HEK293 (cell line): ENCODE measurements at regions of chr14 and their contacts with region 1.

Region 1: GRCh38 chr14:23120541-23121251 is 1.6 kb upstream of the CEBPE start:
- H3K4me3 ChIP-seq: no peak overlapping the region
- H3K27ac ChIP-seq: no peak overlapping the region
- H3K4me1 ChIP-seq: no peaks in the 10 kb centered on the region
- CTCF ChIP-seq: peak; percentile 99

Region 2: GRCh38 chr14:23068476-23069412 is 52.0 kb before region 1 on chr14:
- CTCF ChIA-PET with region 1: interaction called, 12 read pairs
- POLR2A ChIA-PET with region 1: no interaction called
- H3K4me3 ChIP-seq: 0 out of 2 replicates have a peak overlapping the region, but pooled peaks have one; percentile 5
- H3K27ac ChIP-seq: peak overlapping the region; percentile 66
- H3K4me1 ChIP-seq: peaks cover 16% of the 10 kb centered on the region
- CTCF ChIP-seq: peak; percentile 95

Region 3: GRCh38 chr14:23136566-23137133 is 16.0 kb after region 1 on chr14:
- CTCF ChIA-PET with region 1: interaction called, 19 read pairs
- POLR2A ChIA-PET with region 1: no interaction called
- H3K4me3 ChIP-seq: no peak overlapping the region
- H3K27ac ChIP-seq: no peak overlapping the region
- H3K4me1 ChIP-seq: no peaks in the 10 kb centered on the region
- CTCF ChIP-seq: no peak

Region 4: GRCh38 chr14:23167116-23167847 is 46.6 kb after region 1 on chr14:
- CTCF ChIA-PET with region 1: interaction called, 68 read pairs
- POLR2A ChIA-PET with region 1: no interaction called
- H3K4me3 ChIP-seq: no peak overlapping the region
- H3K27ac ChIP-seq: no peak overlapping the region
- H3K4me1 ChIP-seq: peaks cover 16% of the 10 kb centered on the region
- CTCF ChIP-seq: no peak

Region 5: GRCh38 chr14:23193432-23193831 is 72.7 kb after region 1 on chr14:
- CTCF ChIA-PET with region 1: interaction called, 424 read pairs
- POLR2A ChIA-PET with region 1: no interaction called
- H3K4me3 ChIP-seq: no peak overlapping the region
- H3K27ac ChIP-seq: no peak overlapping the region
- H3K4me1 ChIP-seq: no peaks in the 10 kb centered on the region
- CTCF ChIP-seq: no peak

Region 6: DNA sequence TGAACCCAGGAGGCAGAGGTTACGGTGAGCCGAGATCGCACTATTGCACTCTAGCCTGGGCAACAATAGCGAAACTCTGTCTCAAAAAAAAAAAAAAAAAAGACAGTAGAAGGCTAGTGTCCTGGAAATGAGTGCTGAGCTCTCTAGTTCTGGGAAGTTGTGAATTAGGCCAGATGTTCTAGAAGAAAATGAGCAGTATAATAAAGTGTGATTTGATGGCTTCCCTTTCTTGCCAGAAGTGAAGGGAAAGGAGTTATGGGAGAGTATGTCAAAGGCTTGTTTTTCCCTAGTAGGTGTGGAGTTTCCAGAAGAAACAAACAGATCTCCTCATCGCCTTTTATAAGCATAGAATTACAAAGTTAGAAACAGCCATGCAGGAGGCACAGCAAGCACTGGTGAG is 137.6 kb after region 1 on chr14:
- CTCF ChIA-PET with region 1: interaction called, 10 read pairs
- POLR2A ChIA-PET with region 1: no interaction called
- H3K4me3 ChIP-seq: no peak overlapping the region
- H3K27ac ChIP-seq: no peak overlapping the region
- H3K4me1 ChIP-seq: no peaks in the 10 kb centered on the region
- CTCF ChIP-seq: no peak

Region 7: GRCh38 chr14:23352511-23353432 is 232.1 kb after region 1 on chr14 and contains the start of gene SLC22A17:
- CTCF ChIA-PET with region 1: no interaction called
- POLR2A ChIA-PET with region 1: no interaction called
- H3K4me3 ChIP-seq: peak within 1 kb of the TSS; percentile 56
- H3K27ac ChIP-seq: no peak within 1 kb of the TSS
- H3K4me1 ChIP-seq: no peaks in the 10 kb centered on the region
- CTCF ChIP-seq: peak; percentile 57; the same call in 1 of the 2 replicates